PC-9 (cell line): ENCODE measurements at regions of chr5 and their contacts with region 1.

Region 1: GRCh38 chr5:114789773-114790402 is 379.8 kb downstream of the TRIM36 start:
- DNase-seq: no peak
- H3K4me3 ChIP-seq: no peak overlapping the region
- H3K27ac ChIP-seq: no peak overlapping the region
- H3K4me1 ChIP-seq: no peaks in the 10 kb centered on the region
- H3K27me3 ChIP-seq: no peaks in the 10 kb centered on the region; the same call in 1 of the 2 replicates
- CTCF ChIP-seq: peak; percentile 64

Region 2: GRCh38 chr5:113612060-113612496 is 1177.8 kb before region 1 on chr5:
- CTCF ChIA-PET with region 1: no interaction called
- POLR2A ChIA-PET with region 1: no interaction called
- intact Hi-C with region 1: loop called (anchors 5 kb)
- DNase-seq: no peak
- H3K4me3 ChIP-seq: no peak overlapping the region
- H3K27ac ChIP-seq: no peak overlapping the region
- H3K4me1 ChIP-seq: no peaks in the 10 kb centered on the region
- H3K27me3 ChIP-seq: peaks cover 11% of the 10 kb centered on the region; the same call in 1 of the 2 replicates
- CTCF ChIP-seq: peak; percentile 75

Region 3: GRCh38 chr5:114686356-114686755 is 103.5 kb before region 1 on chr5:
- CTCF ChIA-PET with region 1: no interaction called
- POLR2A ChIA-PET with region 1: no interaction called
- intact Hi-C with region 1: no loop called
- DNase-seq: no peak
- H3K4me3 ChIP-seq: no peak overlapping the region
- H3K27ac ChIP-seq: no peak overlapping the region
- H3K4me1 ChIP-seq: no peaks in the 10 kb centered on the region
- H3K27me3 ChIP-seq: no peaks in the 10 kb centered on the region
- CTCF ChIP-seq: no peak

Region 4: DNA sequence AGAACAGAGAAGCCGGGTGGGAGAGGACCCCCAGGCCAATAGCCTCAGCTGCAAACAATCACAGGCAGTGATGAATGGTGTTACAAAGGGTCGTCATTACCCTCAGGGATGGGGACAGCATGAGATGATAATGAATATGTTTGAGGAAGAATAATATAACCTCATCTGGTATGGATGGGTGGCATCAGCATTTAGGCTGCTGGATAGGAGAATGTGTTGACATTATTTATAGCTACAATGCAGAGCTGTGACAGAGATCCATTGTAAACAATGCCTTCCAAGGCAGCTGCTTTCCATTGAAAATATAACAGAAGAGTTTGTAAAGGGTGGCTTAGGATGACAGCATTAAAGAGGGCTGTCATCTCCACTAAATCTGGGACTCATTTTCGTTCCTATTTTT is 62.5 kb before region 1 on chr5:
- CTCF ChIA-PET with region 1: no interaction called
- POLR2A ChIA-PET with region 1: no interaction called
- intact Hi-C with region 1: no loop called
- DNase-seq: no peak
- H3K4me3 ChIP-seq: no peak overlapping the region
- H3K27ac ChIP-seq: no peak overlapping the region
- H3K4me1 ChIP-seq: no peaks in the 10 kb centered on the region
- H3K27me3 ChIP-seq: no peaks in the 10 kb centered on the region
- CTCF ChIP-seq: no peak

Region 5: GRCh38 chr5:114977979-114978573 is 188.2 kb after region 1 on chr5:
- CTCF ChIA-PET with region 1: no interaction called
- POLR2A ChIA-PET with region 1: no interaction called
- intact Hi-C with region 1: no loop called
- DNase-seq: no peak
- H3K4me3 ChIP-seq: no peak overlapping the region
- H3K27ac ChIP-seq: no peak overlapping the region
- H3K4me1 ChIP-seq: no peaks in the 10 kb centered on the region
- H3K27me3 ChIP-seq: no peaks in the 10 kb centered on the region
- CTCF ChIP-seq: no peak